PC-3 (cell line): ENCODE measurements at regions of chr12 and their contacts with region 1.

Region 1: DNA sequence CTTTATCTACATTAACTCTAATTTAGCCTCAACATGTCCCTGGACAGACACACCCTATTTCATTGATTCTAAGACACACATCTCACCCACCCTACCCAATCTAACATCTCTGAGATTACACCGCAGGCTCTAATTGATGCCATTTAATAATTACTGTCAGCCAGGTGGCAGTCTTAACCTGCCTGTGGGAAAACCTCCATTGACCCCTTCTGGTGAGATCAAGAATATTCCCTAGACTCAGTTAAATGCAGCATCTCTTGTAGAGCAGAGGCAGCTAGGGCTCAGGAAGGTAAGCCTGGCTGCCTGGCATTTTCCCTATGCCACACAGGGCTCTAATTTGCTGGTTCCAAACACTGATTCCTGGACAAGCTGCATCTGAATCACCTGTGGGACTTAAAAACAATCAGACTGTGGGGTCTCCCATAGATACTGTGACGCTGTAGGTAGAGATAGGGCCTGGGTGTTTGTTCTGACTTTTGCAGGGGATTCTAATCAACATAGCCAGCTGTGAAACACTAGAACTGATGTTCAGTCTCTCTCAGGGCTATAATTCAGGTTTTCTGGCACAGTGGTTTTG is 14.3 kb downstream of the MCRS1 start:
- DNase-seq: peak; percentile 60
- ATAC-seq: peak; percentile 79
- H3K4me3 ChIP-seq: no peak overlapping the region
- H3K27ac ChIP-seq: no peak overlapping the region
- H3K4me1 ChIP-seq: no peaks in the 10 kb centered on the region
- H3K27me3 ChIP-seq: no peaks in the 10 kb centered on the region
- CTCF ChIP-seq: peak; percentile 84

Region 2: DNA sequence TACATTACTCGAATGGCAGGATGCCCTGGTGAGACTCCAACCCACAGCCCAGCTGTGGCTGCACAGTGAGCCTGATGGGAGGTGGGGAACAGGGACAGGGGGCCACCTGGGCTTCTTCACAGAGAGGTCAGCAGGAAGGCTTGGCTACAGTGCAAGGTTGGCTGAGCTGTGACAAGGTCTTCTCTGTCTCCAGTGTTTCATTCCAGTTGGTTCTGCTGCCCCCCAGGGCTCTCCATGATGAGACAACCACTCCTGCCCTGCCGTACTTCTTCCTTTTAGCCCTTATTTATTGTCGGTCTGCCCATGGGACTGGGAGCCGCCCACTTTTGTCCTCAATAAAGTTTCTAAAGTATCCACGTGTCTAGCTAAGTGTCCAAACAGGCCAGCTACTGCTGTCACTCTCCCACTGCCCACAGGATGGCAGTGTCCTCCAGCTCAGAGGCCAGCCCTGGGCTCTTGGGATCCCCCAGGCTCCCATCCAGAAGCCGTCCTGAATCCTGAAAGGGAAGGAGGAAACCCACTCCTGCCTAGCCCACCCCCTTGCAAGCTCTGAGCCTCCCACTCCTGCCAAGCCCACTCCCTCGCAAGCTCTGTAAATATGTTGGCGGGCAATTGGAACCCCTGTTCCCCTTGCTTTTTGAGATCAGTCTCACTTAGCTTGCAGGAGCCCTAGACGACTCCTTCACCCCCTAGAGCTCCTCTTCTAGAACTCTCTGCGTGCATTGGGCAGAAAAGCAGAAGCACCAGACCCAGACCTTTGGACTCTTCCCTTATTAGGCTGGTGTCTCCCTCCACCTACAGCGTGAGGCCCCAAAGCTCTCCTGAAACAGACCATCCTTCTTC is 222.0 kb before region 1 on chr12:
- CTCF ChIA-PET with region 1: interaction called, 9 read pairs
- POLR2A ChIA-PET with region 1: no interaction called
- intact Hi-C with region 1: loop called (anchors 1 kb)
- DNase-seq: peak; percentile 66
- ATAC-seq: peak; percentile 90
- H3K4me3 ChIP-seq: no peak overlapping the region
- H3K27ac ChIP-seq: no peak overlapping the region
- H3K4me1 ChIP-seq: no peaks in the 10 kb centered on the region
- H3K27me3 ChIP-seq: no peaks in the 10 kb centered on the region
- CTCF ChIP-seq: peak; percentile 88

Region 3: DNA sequence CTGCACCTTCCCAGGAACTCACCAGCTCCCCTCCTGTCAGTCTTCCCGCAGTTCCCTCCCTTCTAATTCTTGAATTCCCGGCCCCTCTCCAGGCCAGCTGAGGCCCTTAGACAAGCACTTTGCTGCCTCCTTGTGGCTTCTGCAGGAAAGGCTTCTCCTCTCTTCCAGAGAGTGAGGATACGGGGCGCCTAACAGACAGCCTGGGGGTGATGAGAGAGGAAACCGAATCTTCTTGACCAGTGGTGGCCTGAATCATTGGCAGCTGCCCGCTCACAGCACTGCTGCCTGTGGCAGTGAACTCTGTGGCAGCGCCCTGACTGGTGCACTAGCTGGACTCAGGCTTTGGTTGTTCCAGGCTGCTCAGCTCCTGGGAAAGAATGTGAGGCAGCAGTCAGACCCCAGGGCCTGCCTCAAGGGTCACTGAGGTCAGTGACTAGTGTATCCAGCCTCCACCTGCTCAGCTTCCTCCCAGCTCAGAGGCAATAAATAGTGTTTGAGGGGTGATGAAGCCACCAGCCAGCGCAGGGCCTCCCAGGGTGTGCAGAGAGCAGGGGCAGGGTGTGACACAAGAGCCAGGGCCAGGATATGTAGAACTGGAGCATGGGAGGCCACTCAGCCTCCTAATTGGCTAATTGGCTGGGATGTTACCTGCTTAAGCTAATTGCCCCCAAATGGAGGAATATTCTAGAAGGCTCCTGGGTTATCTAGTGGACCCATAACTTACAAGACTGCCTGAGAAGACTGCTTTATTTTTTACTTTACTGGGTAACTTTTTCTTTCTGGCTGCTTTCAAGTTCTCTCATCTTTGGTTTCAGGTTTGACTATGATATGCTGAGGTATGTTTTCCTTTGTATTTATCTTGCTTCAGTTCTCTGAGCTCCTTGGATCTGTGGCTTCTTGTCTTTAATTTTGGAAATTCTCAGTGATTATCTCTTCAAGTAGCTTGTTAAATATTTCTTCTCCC is 27.3 kb after region 1 on chr12:
- CTCF ChIA-PET with region 1: interaction called, 3 read pairs
- POLR2A ChIA-PET with region 1: no interaction called
- intact Hi-C with region 1: loop called (anchors 1 kb)
- DNase-seq: peak; percentile 90
- ATAC-seq: peak; percentile 93
- H3K4me3 ChIP-seq: no peak overlapping the region
- H3K27ac ChIP-seq: no peak overlapping the region
- H3K4me1 ChIP-seq: no peaks in the 10 kb centered on the region; the same call in 1 of the 2 replicates
- H3K27me3 ChIP-seq: no peaks in the 10 kb centered on the region
- CTCF ChIP-seq: peak; percentile 92